Activated CD4-positive, alpha-beta T cell treated with anti-CD3 and anti-CD28 coated beads for 36 hours (primary cell): ENCODE measurements at regions of chr2 and their contacts with region 1.

Region 1: GRCh38 chr2:72887754-72888437 is 688 bp downstream of the SPR start:
- DNase-seq: peak; percentile 78
- ATAC-seq: peak; percentile 51
- H3K4me3 Mint-ChIP-seq: peak overlapping the region; percentile 70
- H3K27ac Mint-ChIP-seq: no peak overlapping the region
- H3K4me1 Mint-ChIP-seq: peaks cover 10% of the 10 kb centered on the region
- H3K27me3 Mint-ChIP-seq: peaks cover 53% of the 10 kb centered on the region

Region 2: GRCh38 chr2:72770879-72771461 is 116.9 kb before region 1 on chr2:
- CTCF ChIA-PET with region 1: interaction called, 13 read pairs
- POLR2A ChIA-PET with region 1: no interaction called
- intact Hi-C with region 1: loop called (anchors 1 kb)
- DNase-seq: peak; percentile 71
- ATAC-seq: no peak
- H3K4me3 Mint-ChIP-seq: no peak overlapping the region
- H3K27ac Mint-ChIP-seq: no peak overlapping the region
- H3K4me1 Mint-ChIP-seq: no peaks in the 10 kb centered on the region
- H3K27me3 Mint-ChIP-seq: no peaks in the 10 kb centered on the region

Region 3: DNA sequence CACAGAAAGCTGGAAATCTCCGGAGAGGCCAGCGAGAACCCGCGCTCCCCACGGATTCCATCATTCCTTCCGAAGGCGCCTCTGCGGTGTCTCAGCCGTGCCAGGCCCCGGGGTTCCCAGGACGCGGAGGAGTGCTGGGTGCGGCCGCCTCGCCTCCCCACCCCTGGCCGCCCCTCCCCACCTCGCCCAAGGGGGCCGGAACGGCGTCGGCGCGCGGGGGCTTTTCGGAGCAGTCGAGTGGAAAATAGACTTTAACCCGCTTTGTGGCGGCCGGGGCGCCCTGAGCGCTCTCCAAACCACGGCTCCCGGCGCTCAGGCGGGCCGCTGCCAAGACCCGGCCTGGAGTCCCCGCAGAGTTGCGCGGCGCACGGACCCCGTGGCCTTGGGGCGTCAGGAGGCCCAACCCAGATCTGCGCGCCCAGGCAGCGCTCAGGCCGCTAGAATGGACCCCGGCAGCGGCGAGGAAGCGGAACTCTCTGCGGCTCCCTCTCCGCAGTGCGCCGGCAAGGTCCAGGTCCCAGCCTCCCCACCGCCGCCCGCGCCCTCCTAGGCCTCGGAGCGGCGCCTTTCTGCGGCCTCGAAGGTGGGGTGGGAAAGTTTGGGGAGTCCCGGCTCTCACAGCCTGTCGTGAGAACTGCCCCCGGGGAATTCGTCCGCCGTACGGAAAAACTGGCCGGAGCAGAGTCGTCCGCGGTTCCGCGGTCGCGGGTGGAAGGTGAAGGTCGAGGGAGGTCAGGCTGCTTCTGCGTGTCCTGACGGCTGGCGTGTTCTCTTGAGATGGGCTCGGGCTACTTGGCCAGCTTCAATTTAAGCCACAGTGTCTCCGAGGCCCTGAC is 28.2 kb after region 1 on chr2:
- CTCF ChIA-PET with region 1: interaction called, 27 read pairs
- POLR2A ChIA-PET with region 1: no interaction called
- intact Hi-C with region 1: loop called in 1 of 2 experiments (anchors 1 kb)
- DNase-seq: peak; percentile 74
- ATAC-seq: peak; percentile 60
- H3K4me3 Mint-ChIP-seq: peak overlapping the region; percentile 64
- H3K27ac Mint-ChIP-seq: no peak overlapping the region
- H3K4me1 Mint-ChIP-seq: peaks cover 30% of the 10 kb centered on the region
- H3K27me3 Mint-ChIP-seq: peaks cover 71% of the 10 kb centered on the region

Region 4: GRCh38 chr2:72973566-72974435 is 85.9 kb after region 1 on chr2:
- CTCF ChIA-PET with region 1: interaction called, 60 read pairs
- POLR2A ChIA-PET with region 1: interaction called, 3 read pairs
- intact Hi-C with region 1: loop called (anchors 1 kb)
- DNase-seq: peak; percentile 64
- ATAC-seq: peak; percentile 83
- H3K4me3 Mint-ChIP-seq: no peak overlapping the region
- H3K27ac Mint-ChIP-seq: no peak overlapping the region
- H3K4me1 Mint-ChIP-seq: no peaks in the 10 kb centered on the region
- H3K27me3 Mint-ChIP-seq: no peaks in the 10 kb centered on the region

Region 5: GRCh38 chr2:73163483-73164367 is 275.8 kb after region 1 on chr2:
- CTCF ChIA-PET with region 1: no interaction called
- POLR2A ChIA-PET with region 1: no interaction called
- intact Hi-C with region 1: loop called (anchors 1 kb)
- DNase-seq: peak; percentile 81
- ATAC-seq: peak; percentile 97
- H3K4me3 Mint-ChIP-seq: no peak overlapping the region
- H3K27ac Mint-ChIP-seq: no peak overlapping the region
- H3K4me1 Mint-ChIP-seq: no peaks in the 10 kb centered on the region
- H3K27me3 Mint-ChIP-seq: peaks cover 11% of the 10 kb centered on the region